Panc1 (cell line): ENCODE measurements at regions of chr1 and their contacts with region 1.

Region 1: GRCh38 chr1:6784560-6785317 is 515 bp upstream of the CAMTA1 start:
- DNase-seq: peak; percentile 100
- ATAC-seq: peak; percentile 92
- H3K4me3 ChIP-seq: peak overlapping the region; percentile 74 to 85
- H3K27ac ChIP-seq: peak overlapping the region; percentile 74
- H3K4me1 ChIP-seq: peaks cover 15% of the 10 kb centered on the region
- H3K27me3 ChIP-seq: no peaks in the 10 kb centered on the region
- CTCF ChIP-seq: no peak

Region 2: GRCh38 chr1:6743189-6744101 is 41.3 kb before region 1 on chr1:
- CTCF ChIA-PET with region 1: no interaction called
- POLR2A ChIA-PET with region 1: interaction called, 4 read pairs
- in situ Hi-C with region 1: no loop called
- intact Hi-C with region 1: loop called (anchors 2 kb)
- DNase-seq: no peak
- ATAC-seq: peak; percentile 83
- H3K4me3 ChIP-seq: no peak overlapping the region
- H3K27ac ChIP-seq: no peak overlapping the region
- H3K4me1 ChIP-seq: no peaks in the 10 kb centered on the region; the same call in 1 of the 2 replicates
- H3K27me3 ChIP-seq: no peaks in the 10 kb centered on the region
- CTCF ChIP-seq: no peak

Region 3: DNA sequence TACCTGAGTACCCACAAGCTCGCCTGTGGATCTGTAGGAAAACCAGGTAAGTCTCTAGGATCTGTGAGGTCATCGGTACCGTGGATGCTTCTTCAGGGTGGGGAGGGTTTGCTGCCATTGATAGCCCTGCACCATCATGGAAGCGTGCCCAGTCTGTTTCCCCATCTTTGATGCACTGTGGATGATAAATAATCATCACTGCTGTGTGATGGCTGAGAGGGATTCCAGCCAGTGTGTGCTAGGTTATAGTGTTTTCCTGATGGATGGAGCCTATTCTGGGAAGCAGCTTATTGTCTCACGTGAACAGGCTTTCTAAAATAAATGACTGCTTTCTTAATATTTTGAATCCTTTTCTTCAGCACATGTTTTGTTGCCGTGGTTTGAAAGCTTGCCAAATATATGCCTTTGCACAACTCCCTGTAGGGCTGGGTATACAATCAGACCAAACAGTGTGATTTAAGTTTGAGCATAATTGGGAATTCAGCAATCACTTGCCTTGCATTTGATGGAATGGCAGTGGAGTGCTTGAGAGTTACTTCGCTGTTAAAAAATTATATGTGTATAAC is 114.3 kb after region 1 on chr1:
- CTCF ChIA-PET with region 1: no interaction called
- POLR2A ChIA-PET with region 1: interaction called, 12 read pairs
- in situ Hi-C with region 1: no loop called
- intact Hi-C with region 1: no loop called
- DNase-seq: no peak
- ATAC-seq: no peak
- H3K4me3 ChIP-seq: no peak overlapping the region
- H3K27ac ChIP-seq: no peak overlapping the region
- H3K4me1 ChIP-seq: no peaks in the 10 kb centered on the region
- H3K27me3 ChIP-seq: no peaks in the 10 kb centered on the region
- CTCF ChIP-seq: no peak